ENCODE measurements at regions of chr14 and their contacts with region 1.

Region 1: GRCh38 chr14:34875031-34875922 is at the start of gene BAZ1A:
- DNase-seq: peak; percentile 47
- H3K4me3 Mint-ChIP-seq: peak within 1 kb of the TSS; percentile 100
- H3K27ac Mint-ChIP-seq: peak within 1 kb of the TSS; percentile 100
- H3K4me1 Mint-ChIP-seq: peaks cover 22% of the 10 kb centered on the region
- H3K27me3 Mint-ChIP-seq: no peaks in the 10 kb centered on the region
- total RNA-seq, gene BAZ1A: 81.7 and 85.7 TPM in 2 replicates

Region 2: DNA sequence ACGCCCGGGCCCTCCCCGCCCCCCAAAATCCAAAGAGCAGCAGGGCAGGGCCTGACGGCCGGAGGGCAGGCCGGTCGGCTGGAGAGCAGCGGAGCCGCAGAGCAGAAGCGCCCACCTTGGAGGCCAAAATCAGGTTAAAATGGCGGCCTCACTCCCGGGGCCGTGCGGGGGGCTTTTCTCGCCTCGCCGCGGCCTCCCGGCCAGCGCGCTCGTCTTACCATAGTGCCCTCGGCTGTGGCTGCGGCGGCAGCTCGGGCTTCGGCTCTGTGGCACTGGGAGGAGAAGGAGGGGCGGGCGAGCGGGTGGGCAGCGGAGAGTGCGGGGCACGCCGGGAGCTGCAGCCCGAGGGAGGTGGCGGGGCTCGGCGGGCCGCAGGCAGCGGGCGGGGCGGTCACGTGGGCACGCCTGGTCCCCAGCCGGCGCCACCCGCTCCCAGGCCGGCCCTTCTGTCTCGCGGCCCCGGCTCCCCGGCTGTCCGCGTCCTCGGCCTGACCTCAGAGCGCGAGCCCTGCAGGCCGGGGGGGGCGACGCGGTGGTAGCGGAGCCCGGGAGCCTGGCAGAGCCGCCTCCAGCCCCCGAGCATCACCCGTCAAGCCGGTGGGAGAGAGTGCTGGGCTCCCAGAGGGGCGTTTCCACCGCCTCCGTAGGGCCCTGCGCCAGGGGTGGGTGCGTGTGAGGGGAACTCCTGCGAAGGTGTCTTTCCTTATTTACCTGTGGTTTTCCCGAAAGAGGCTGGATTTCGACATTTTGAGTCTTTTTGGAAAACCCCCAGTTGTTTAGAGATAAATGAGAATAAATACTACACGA is 160.8 kb before region 1 on chr14 and contains the start of gene CFL2:
- intact Hi-C with region 1: loop called (anchors 2 kb)
- DNase-seq: peak; percentile 57
- H3K4me3 Mint-ChIP-seq: peak within 1 kb of the TSS; percentile 89
- H3K27ac Mint-ChIP-seq: peak within 1 kb of the TSS; percentile 90
- H3K4me1 Mint-ChIP-seq: peaks cover 28% of the 10 kb centered on the region
- H3K27me3 Mint-ChIP-seq: peaks cover 16% of the 10 kb centered on the region
- total RNA-seq, gene CFL2: 7.1 and 8.4 TPM in 2 replicates

Region 3: DNA sequence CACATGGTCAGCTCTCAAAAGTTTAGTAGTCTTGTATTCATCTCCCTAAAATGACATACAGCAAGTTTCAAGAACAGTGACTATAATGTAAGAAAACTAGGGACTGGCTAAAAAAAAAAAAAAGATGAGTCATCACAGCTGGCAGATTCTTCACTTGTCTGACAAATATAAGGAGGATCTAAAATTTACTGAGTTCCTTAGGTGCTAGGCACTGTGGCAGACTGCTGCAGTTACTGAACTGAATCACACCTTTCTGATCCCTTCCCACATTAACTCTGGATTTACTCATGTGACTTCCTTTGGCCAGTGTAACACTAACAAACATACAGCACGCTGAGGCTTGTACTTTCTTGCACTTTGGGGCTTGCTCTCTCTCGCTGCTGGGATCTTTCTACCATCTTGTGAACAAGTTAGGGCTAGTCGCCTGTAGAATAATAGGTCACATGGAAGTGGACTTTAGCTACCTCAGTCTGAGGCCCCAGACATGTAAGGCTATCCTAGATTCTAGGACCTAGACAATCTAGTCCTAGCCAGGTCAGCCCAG is 32.2 kb before region 1 on chr14:
- intact Hi-C with region 1: loop called (anchors 2 kb)
- DNase-seq: no peak
- H3K4me3 Mint-ChIP-seq: no peak overlapping the region
- H3K27ac Mint-ChIP-seq: peak overlapping the region; percentile 61
- H3K4me1 Mint-ChIP-seq: peaks cover 12% of the 10 kb centered on the region
- H3K27me3 Mint-ChIP-seq: no peaks in the 10 kb centered on the region

Region 4: DNA sequence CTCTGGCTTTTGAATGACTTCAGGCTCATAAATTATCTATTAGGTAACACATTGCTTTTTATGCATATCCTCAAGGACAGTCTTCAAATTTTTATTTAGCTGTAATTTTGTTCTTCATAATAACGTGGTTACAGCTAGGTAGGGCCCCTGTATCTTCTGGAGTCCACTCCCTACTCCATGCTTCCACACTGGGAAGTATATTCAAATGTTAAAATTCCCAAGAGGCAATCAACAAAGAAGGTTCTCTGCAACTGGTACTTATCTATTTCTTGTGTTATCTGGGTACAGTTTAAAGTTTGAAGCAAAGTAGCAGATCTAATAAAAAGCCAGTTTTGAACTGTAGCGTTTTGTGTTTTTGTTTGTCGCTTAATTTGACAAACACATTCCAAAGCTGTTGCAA is 20.0 kb after region 1 on chr14:
- intact Hi-C with region 1: no loop called
- DNase-seq: no peak
- H3K4me3 Mint-ChIP-seq: no peak overlapping the region
- H3K27ac Mint-ChIP-seq: no peak overlapping the region
- H3K4me1 Mint-ChIP-seq: peaks cover 5% of the 10 kb centered on the region
- H3K27me3 Mint-ChIP-seq: no peaks in the 10 kb centered on the region

Region 5: GRCh38 chr14:34930591-34931091 is 55.4 kb after region 1 on chr14:
- intact Hi-C with region 1: loop called (anchors 1 kb)
- DNase-seq: no peak
- H3K4me3 Mint-ChIP-seq: peak overlapping the region; percentile 59
- H3K27ac Mint-ChIP-seq: peak overlapping the region; percentile 94
- H3K4me1 Mint-ChIP-seq: peaks cover 35% of the 10 kb centered on the region
- H3K27me3 Mint-ChIP-seq: no peaks in the 10 kb centered on the region

Region 6: DNA sequence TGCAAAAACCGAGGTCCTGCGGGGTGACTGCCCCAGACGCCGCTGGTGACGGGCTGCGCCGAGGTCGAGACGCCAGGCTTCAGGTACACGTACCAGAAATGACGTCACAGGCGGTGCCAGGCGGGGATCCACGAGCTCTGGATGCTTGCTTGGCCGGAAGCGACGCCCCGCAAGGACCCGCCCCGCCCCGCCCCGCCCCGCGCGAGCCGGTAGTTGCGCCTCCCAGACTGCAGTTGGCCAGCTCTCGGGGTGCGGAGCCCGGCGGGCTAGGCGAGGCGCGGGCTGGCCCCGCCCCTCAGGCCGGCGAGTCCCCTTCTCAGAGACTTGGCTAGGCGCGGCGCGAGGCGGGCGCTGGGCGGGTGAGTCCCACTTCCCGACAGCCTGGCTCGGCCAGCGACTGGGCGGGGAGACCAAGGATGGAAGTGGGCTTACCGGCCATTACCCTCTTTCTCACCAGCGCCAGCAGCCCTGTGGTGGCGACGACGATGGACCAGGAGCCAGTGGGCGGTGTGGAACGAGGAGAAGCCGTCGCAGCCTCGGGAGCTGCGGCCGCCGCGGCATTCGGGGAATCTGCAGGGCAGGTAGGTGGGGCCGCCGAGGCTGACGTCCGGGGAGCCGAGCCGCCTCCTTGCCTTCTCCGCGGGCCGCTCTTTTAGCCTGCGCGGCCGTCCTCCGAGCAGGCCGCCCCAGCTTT is 170.9 kb after region 1 on chr14 and contains the start of gene FAM177A1:
- intact Hi-C with region 1: loop called (anchors 1 kb)
- DNase-seq: peak; percentile 97
- H3K4me3 Mint-ChIP-seq: peak within 1 kb of the TSS; percentile 98
- H3K27ac Mint-ChIP-seq: peak within 1 kb of the TSS; percentile 98
- H3K4me1 Mint-ChIP-seq: peaks cover 21% of the 10 kb centered on the region
- H3K27me3 Mint-ChIP-seq: no peaks in the 10 kb centered on the region
- total RNA-seq, gene FAM177A1: 41.3 and 43.2 TPM in 2 replicates

Region 7: DNA sequence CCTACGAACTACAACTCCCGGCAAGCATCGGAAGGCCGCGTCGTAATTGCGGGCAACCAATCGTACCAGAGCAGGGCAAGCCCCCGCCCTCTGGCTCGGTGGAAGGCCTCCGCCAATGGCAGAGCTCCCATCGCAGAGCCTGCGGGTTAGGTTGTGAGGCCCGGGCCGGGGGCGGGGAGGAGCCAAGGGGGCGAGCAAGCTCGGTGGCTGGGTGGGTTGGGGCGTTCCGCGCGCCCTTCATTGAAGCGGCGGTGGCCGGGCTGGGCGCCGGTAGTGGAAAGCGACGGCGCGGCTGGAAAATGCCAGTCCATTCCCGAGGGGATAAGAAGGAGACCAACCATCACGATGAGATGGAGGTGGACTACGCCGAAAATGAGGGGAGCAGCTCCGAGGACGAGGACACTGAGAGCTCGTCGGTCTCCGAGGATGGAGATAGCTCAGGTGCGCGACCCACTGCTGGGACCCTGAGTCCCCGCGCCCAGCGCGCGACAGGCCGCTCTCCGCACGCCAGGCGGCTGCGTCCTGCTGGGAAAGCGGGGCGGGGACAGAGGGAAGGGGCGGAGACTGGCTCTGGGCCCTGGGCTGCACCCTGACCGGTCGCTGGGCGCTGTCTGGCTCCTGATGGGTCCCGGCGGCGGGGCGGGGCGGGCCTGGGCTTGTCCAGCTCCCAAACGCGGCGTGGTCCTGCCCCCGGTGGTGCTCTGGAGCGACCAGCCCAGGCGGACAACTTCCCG is 951.1 kb after region 1 on chr14 and contains the start of gene BRMS1L:
- intact Hi-C with region 1: loop called (anchors 10 kb)
- DNase-seq: peak; percentile 96
- H3K4me3 Mint-ChIP-seq: peak within 1 kb of the TSS; percentile 84
- H3K27ac Mint-ChIP-seq: peak within 1 kb of the TSS; percentile 90
- H3K4me1 Mint-ChIP-seq: peaks cover 21% of the 10 kb centered on the region
- H3K27me3 Mint-ChIP-seq: no peaks in the 10 kb centered on the region
- total RNA-seq, gene BRMS1L: 5.3 and 6.1 TPM in 2 replicates

Measured in activated T-helper 2 cell treated with anti-CD3 and anti-CD28 coated beads, Interferon-gamma antibody, Interleukin-2, Interleukin-4, amounts not matched to agents 10 μg/mL and 5 μg/mL and 100 μg/mL, durations not matched to agents 14 hours and 24 hours and 36 hours (primary cell).